ENCODE measurements at regions of chr2 and their contacts with region 1.

Region 1: DNA sequence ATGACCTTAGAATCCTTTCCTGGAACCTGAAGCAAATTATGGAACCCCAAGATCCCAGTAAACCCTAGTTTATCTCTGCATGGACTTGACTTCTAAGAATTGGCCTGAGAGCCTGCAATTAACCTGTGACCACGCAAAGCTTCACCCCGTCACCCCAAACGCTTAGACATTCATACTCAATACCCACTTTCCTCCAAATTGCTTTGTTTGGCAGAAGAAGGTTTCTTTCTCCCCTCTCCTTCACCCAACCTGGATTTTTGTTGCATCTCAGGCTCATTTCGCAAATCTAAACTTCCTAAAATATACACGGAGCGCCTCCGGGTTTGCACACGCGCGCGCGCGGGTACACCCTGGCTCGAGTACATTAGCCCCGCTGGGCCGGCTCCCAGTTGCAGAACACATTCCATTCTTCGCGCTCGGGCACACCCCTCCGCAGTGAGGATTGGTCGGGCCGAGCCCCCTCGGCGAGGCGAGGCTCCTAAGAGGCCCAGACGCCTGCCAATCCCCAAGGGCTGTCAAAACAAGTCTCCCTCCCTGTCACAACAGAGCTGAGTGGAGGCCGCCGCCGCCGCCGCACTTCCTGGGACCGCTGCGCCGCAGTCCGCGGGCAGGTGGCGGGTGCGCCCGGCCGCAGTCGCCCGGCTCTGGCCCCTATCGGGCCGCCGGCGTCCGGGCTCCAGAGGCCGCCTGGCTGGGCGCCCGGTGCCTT is at the start of gene PLCL1:
- DNase-seq: peak; percentile 89 to 92 (median 90)
- H3K4me3 ChIP-seq: peak within 1 kb of the TSS; percentile 60 to 82
- H3K4me3 Mint-ChIP-seq: peak within 1 kb of the TSS; percentile 92 to 97 (median 96)
- H3K27ac ChIP-seq: peak within 1 kb of the TSS; percentile 61
- H3K27ac Mint-ChIP-seq: peak within 1 kb of the TSS; percentile 77 to 94 (median 89)
- H3K4me1 ChIP-seq: peaks cover 50% of the 10 kb centered on the region
- H3K4me1 Mint-ChIP-seq: peaks cover 35 to 54% (median 45%) of the 10 kb centered on the region in 4 donors
- H3K27me3 ChIP-seq: no peaks in the 10 kb centered on the region
- H3K27me3 Mint-ChIP-seq: peaks cover 0 to 1% of the 10 kb centered on the region in 2 donors
- total RNA-seq, gene PLCL1: 16.9 to 17.6 TPM

Region 2: DNA sequence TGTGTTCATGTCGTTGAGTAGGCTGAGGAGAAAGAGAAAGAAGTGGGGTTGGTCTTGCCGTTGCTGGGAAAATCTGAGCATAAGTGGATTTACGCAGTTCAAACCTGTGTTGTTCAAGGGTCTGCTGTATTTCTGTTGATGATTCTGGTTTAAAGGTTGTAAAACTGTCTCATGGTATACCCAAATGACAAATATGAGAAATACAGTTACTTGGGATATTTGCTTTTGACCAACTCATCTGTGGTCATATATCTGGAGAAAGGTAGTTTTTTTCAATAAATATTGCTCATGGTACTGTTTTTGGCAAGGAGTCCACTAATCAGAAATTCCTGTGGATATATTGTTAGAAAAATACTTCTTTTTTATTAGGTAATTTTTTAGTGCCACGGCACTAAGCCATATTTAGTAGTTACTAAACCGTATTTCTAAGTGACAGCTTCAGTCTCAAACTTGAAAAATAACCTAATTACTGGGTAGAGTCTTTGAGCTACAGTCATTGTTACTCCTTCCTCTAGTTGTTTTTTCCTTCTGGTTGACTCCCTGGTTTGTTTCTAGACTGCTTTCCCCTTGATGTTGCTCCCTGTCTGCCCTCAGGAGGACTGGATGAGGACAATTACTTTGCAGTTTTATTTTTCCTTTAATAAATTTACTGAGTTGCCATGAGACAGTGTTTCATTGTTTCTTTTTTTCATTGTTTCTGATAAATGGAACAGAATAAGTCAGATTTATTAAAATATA is 256.9 kb before region 1 on chr2:
- CTCF ChIA-PET with region 1: no interaction called
- POLR2A ChIA-PET with region 1: no interaction called
- intact Hi-C with region 1: no loop called
- DNase-seq: no peak
- H3K4me3 ChIP-seq: no peak overlapping the region
- H3K4me3 Mint-ChIP-seq: no peak overlapping the region
- H3K27ac ChIP-seq: no peak overlapping the region
- H3K27ac Mint-ChIP-seq: peak overlapping the region in 2 of 7 donors; percentile 47 to 85
- H3K4me1 ChIP-seq: no peaks in the 10 kb centered on the region
- H3K4me1 Mint-ChIP-seq: peaks cover 0 to 6% (median 6%) of the 10 kb centered on the region in 4 donors
- H3K27me3 ChIP-seq: no peaks in the 10 kb centered on the region
- H3K27me3 Mint-ChIP-seq: no peaks in the 10 kb centered on the region

Region 3: GRCh38 chr2:197647961-197648690 is 156.1 kb before region 1 on chr2:
- CTCF ChIA-PET with region 1: no interaction called
- POLR2A ChIA-PET with region 1: no interaction called
- intact Hi-C with region 1: no loop called
- DNase-seq: no peak
- H3K4me3 ChIP-seq: no peak overlapping the region
- H3K4me3 Mint-ChIP-seq: no peak overlapping the region
- H3K27ac ChIP-seq: no peak overlapping the region
- H3K27ac Mint-ChIP-seq: no peak overlapping the region
- H3K4me1 ChIP-seq: no peaks in the 10 kb centered on the region
- H3K4me1 Mint-ChIP-seq: no peaks in the 10 kb centered on the region
- H3K27me3 ChIP-seq: peaks cover 3% of the 10 kb centered on the region
- H3K27me3 Mint-ChIP-seq: peaks cover 13 to 17% of the 10 kb centered on the region in 2 donors

Region 4: DNA sequence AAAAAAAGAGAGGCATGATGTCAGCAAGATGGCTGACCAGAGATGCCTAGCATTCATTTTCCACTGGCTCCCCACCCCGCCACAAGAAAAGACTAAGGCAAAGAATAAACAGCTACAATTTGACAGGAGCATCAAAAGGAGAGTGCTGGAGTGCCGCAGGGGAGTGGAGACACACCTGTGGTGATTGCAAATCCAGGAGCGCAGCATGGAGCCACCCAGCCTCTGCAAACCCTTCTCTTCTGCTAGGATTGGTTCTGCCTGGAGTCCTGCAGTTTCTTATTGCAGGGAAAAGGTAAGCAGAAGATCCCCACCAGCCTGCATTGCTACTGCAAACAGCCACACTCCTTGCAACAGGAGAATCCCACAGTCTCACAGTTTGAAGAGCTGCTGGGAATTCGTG is 45.2 kb before region 1 on chr2:
- CTCF ChIA-PET with region 1: no interaction called
- POLR2A ChIA-PET with region 1: no interaction called
- intact Hi-C with region 1: no loop called
- DNase-seq: no peak
- H3K4me3 ChIP-seq: no peak overlapping the region
- H3K4me3 Mint-ChIP-seq: no peak overlapping the region
- H3K27ac ChIP-seq: no peak overlapping the region
- H3K27ac Mint-ChIP-seq: no peak overlapping the region
- H3K4me1 ChIP-seq: no peaks in the 10 kb centered on the region
- H3K4me1 Mint-ChIP-seq: no peaks in the 10 kb centered on the region
- H3K27me3 ChIP-seq: no peaks in the 10 kb centered on the region
- H3K27me3 Mint-ChIP-seq: peaks cover 1 to 7% of the 10 kb centered on the region in 2 donors

Region 5: DNA sequence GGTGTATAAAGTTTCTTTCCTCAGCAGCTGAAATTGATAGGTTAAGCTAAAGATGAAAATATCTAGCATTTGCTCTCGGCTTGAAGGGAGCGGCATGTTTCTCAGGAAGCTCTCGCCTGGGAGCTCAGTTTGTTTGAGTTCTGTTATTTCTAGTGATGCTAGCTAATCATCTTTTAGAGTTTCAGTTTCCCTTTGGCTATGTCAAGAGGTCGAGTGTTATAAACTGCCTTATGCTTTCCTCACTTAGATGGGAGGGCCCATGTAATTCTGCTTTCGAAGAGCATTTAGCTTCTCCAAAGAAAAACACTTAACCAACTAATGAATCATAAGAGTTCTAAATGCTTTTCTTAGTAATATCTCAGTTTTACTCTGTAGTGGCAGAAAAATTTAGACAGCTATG is 33.8 kb after region 1 on chr2:
- CTCF ChIA-PET with region 1: interaction called, 4 read pairs
- POLR2A ChIA-PET with region 1: interaction called, 5 read pairs
- intact Hi-C with region 1: loop called (anchors 2 kb)
- DNase-seq: peak; percentile 36 to 54 (median 39)
- H3K4me3 ChIP-seq: no peak overlapping the region
- H3K4me3 Mint-ChIP-seq: peak overlapping the region; percentile 70 to 92 (median 78)
- H3K27ac ChIP-seq: peak overlapping the region; percentile 50
- H3K27ac Mint-ChIP-seq: peak overlapping the region; percentile 87 to 94 (median 92)
- H3K4me1 ChIP-seq: peaks cover 45% of the 10 kb centered on the region
- H3K4me1 Mint-ChIP-seq: peaks cover 32 to 56% (median 48%) of the 10 kb centered on the region in 4 donors
- H3K27me3 ChIP-seq: no peaks in the 10 kb centered on the region
- H3K27me3 Mint-ChIP-seq: no peaks in the 10 kb centered on the region

Region 6: GRCh38 chr2:197873293-197873701 is 69.1 kb after region 1 on chr2:
- CTCF ChIA-PET with region 1: no interaction called
- POLR2A ChIA-PET with region 1: interaction called, 9 read pairs
- intact Hi-C with region 1: loop called (anchors 1 kb)
- DNase-seq: no peak
- H3K4me3 ChIP-seq: no peak overlapping the region
- H3K4me3 Mint-ChIP-seq: no peak overlapping the region
- H3K27ac ChIP-seq: no peak overlapping the region
- H3K27ac Mint-ChIP-seq: no peak overlapping the region
- H3K4me1 ChIP-seq: peaks cover 43% of the 10 kb centered on the region
- H3K4me1 Mint-ChIP-seq: peaks cover 30 to 50% (median 42%) of the 10 kb centered on the region in 4 donors
- H3K27me3 ChIP-seq: no peaks in the 10 kb centered on the region
- H3K27me3 Mint-ChIP-seq: no peaks in the 10 kb centered on the region

Region 7: GRCh38 chr2:197952540-197953202 is 148.5 kb after region 1 on chr2:
- CTCF ChIA-PET with region 1: no interaction called
- POLR2A ChIA-PET with region 1: no interaction called
- intact Hi-C with region 1: loop called (anchors 5 kb)
- DNase-seq: peak in 1 of 5 donors; percentile 13
- H3K4me3 ChIP-seq: no peak overlapping the region
- H3K4me3 Mint-ChIP-seq: peak overlapping the region in 1 of 8 donors; percentile 11
- H3K27ac ChIP-seq: no peak overlapping the region
- H3K27ac Mint-ChIP-seq: peak overlapping the region in 3 of 7 donors; percentile 55 to 68 (median 56)
- H3K4me1 ChIP-seq: peaks cover 21% of the 10 kb centered on the region
- H3K4me1 Mint-ChIP-seq: peaks cover 37 to 83% (median 63%) of the 10 kb centered on the region in 4 donors
- H3K27me3 ChIP-seq: no peaks in the 10 kb centered on the region
- H3K27me3 Mint-ChIP-seq: no peaks in the 10 kb centered on the region

Region 8: DNA sequence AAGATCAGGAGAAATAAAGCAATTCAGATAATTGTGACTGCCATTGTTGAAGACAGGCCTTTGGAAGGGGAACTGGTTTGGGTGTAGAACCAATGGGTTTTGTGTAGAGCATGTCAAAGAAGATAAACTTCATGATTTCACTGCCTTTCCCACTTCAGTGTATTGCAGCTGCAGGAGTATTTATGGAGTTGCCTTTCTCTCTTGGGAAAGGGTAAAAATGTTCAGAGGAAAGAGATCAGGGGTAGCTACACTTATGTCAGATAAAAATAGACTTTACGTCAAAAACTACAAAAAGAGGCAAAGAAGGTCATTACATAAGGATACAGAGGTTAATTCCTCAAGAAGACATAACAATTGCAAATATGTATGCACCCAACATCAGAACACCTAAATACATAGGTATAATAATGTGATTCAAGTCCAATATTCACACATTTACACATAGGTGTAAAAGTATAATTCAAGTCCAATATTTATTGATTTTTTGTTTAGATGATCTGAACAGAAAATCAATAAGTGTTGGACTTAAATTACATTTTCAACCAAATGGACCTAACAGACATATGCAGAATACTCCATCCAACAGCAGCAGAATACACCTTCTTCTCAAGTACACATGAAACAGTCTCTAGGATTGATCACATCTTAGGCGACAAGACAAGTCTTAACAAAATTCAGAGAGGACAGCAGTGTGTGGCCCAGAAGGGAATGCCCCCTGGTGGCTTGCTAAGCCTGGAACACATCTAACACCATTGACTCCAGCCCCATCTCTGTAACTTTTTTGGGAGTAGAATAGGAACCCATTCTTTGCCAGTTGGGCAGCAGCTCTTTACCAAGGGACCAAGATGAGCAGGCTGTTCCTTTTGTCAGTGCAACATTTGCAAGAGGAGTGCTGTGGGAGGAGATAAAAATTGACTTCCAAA is 249.8 kb after region 1 on chr2:
- CTCF ChIA-PET with region 1: interaction called, 5 read pairs
- POLR2A ChIA-PET with region 1: interaction called, 3 read pairs
- intact Hi-C with region 1: loop called (anchors 1 kb)
- DNase-seq: peak; percentile 30 to 46 (median 35)
- H3K4me3 ChIP-seq: no peak overlapping the region
- H3K4me3 Mint-ChIP-seq: no peak overlapping the region
- H3K27ac ChIP-seq: no peak overlapping the region
- H3K27ac Mint-ChIP-seq: peak overlapping the region in 1 of 7 donors; percentile 16
- H3K4me1 ChIP-seq: no peaks in the 10 kb centered on the region
- H3K4me1 Mint-ChIP-seq: peaks cover 0 to 17% (median 14%) of the 10 kb centered on the region in 4 donors
- H3K27me3 ChIP-seq: no peaks in the 10 kb centered on the region
- H3K27me3 Mint-ChIP-seq: no peaks in the 10 kb centered on the region